ENCODE measurements at regions of chrX and their contacts with region 1.

Region 1: GRCh38 chrX:2690856-2691542 is at the start of gene CD99:
- DNase-seq: peak; percentile 80
- ATAC-seq: peak; percentile 90
- H3K4me3 ChIP-seq: peak within 1 kb of the TSS; percentile 87 to 94 (median 91)
- H3K27ac ChIP-seq: peak within 1 kb of the TSS; percentile 84
- H3K4me1 ChIP-seq: peaks cover 53% of the 10 kb centered on the region
- H3K27me3 ChIP-seq: no peaks in the 10 kb centered on the region; a peak in 1 of 5 replicates
- CTCF ChIP-seq: no peak
- EP300 ChIP-seq: no peak
- POLR2A ChIP-seq: peak in 1 of 2 experiments; percentile 58; a peak in 2 of 4 replicates
- RAD21 ChIP-seq: peak; percentile 54
- total RNA-seq, gene CD99: 57.9 and 111 TPM in 2 replicates

Region 2: DNA sequence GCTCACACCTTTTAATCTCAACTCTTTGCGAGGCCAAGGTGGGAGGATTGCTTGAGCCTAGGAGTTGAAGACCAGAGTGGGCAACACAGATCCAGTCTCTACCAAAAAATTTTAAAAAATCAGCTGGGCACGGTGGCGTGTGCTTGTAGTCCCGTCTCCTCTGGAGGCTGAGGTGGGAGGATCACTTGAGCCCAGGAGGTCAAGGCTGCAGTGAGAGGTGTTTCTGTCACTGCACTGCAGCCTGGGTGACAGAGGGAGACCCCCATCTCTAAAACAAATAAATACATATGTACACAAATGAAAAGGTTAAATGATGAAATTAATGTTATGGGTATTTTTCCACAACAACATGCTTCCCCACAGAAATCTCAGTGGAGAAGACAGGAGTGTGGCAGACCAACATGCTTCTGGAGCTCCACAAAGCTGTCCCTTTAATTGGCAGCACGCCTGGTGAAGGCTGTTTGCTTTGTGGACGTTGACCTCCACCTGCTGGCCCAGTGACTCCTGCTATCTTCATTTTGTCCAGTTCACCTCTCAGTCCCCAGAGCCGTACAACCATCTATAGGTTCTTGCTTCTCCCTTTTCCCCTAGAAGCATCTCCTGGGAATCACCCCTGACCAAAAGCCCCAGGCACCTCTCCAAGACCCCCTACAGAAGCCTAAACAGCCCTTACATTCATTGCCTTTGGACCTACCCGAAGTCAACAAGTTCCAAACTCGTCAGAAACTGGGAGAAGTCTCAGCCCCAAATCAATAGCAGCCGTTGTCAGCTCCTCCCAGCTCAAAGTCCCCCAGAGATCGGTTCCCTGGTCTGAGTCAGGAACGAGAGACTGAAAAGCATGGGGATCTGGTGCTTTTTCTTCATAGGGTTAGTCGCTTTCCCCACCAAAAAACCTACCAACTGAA is 36.3 kb before region 1 on chrX:
- CTCF ChIA-PET with region 1: no interaction called
- POLR2A ChIA-PET with region 1: no interaction called
- in situ Hi-C with region 1: loop called (anchors 5 kb)
- intact Hi-C with region 1: loop called (anchors 1 kb)
- DNase-seq: peak; percentile 90
- ATAC-seq: peak; percentile 85
- H3K4me3 ChIP-seq: peak overlapping the region; percentile 48 to 68 (median 56)
- H3K27ac ChIP-seq: peak overlapping the region; percentile 95
- H3K4me1 ChIP-seq: peaks cover 56% of the 10 kb centered on the region
- H3K27me3 ChIP-seq: no peaks in the 10 kb centered on the region
- CTCF ChIP-seq: peak; percentile 66
- EP300 ChIP-seq: peak; percentile 1 to 28; a peak in 1 of 4 replicates
- POLR2A ChIP-seq: peak; percentile 64 to 67
- RAD21 ChIP-seq: no peak

Region 3: DNA sequence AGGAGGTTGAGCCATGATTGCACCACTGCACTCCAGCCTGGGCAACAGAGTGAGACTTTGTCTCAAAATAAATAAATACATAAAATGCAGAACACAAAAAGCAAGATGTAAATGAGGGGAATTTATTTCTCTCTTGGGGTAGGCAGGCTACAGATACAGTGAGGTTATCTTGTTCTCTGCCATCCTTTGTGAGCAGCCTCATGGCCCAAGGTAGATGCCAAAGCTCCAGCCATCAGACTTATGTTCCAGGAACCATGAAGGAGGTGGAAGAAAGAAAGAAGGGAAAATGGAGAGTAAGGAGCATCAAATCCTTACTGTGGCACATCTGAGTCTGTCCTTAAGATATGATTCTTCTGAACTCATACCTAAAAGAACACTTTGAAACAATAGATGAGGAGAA is 326.5 kb after region 1 on chrX:
- CTCF ChIA-PET with region 1: no interaction called
- POLR2A ChIA-PET with region 1: no interaction called
- in situ Hi-C with region 1: no loop called
- intact Hi-C with region 1: no loop called
- DNase-seq: no peak
- ATAC-seq: no peak
- H3K4me3 ChIP-seq: no peak overlapping the region
- H3K27ac ChIP-seq: no peak overlapping the region
- H3K4me1 ChIP-seq: no peaks in the 10 kb centered on the region
- H3K27me3 ChIP-seq: no peaks in the 10 kb centered on the region
- CTCF ChIP-seq: no peak
- EP300 ChIP-seq: no peak
- POLR2A ChIP-seq: no peak
- RAD21 ChIP-seq: no peak